ENCODE measurements at regions of chr17 and their contacts with region 1.

Region 1: DNA sequence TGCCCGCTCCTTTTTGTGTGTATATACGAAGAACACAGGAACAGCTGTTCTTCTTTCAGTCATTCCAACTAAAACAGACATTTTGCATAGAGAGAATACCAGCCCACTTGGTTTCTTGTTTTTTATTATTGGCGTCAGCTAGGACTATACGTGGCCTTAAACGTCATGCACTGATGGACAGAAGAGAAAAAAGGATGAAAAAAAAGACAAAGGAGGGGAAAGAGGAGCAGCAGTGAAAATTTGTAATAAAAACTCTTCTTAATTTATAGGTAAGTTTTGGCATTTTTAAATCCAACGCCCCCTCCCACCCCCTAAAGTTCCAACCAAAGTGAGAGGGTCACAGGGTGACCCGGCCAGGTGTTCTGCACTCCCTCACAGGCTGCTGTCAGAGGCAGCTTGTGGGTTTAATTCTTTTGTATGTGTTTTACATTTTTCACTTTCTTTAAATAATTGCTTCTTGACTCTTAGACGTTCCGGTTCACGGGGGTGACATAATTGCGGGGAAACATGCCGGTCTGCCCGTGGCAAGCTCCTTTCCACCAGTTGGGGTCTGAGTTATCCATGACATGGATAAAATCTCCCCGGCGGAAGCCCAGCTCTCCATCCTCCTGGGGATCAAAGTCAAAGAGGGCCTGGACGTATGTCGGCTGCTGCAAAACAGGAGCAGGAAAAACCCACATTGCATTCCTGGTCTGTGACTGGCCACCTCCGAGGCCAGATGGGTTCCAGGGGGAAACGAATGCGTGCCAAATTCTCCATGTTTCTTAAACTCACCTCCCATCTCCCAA is 30.9 kb upstream of the SLC25A19 start:
- DNase-seq: no peak
- ATAC-seq: peak; percentile 67
- H3K4me3 ChIP-seq: peak overlapping the region; percentile 59; the same call in 1 of the 2 replicates
- H3K27ac ChIP-seq: peak overlapping the region; percentile 85
- H3K4me1 ChIP-seq: peaks cover 76% of the 10 kb centered on the region
- H3K27me3 ChIP-seq: no peaks in the 10 kb centered on the region
- CTCF ChIP-seq: no peak
- EP300 ChIP-seq: peak; percentile 63 to 75; a peak in 3 of 4 replicates
- POLR2A ChIP-seq: no peak; the same call in 1 of the 2 replicates
- RAD21 ChIP-seq: no peak; the same call in 1 of the 2 replicates

Region 2: DNA sequence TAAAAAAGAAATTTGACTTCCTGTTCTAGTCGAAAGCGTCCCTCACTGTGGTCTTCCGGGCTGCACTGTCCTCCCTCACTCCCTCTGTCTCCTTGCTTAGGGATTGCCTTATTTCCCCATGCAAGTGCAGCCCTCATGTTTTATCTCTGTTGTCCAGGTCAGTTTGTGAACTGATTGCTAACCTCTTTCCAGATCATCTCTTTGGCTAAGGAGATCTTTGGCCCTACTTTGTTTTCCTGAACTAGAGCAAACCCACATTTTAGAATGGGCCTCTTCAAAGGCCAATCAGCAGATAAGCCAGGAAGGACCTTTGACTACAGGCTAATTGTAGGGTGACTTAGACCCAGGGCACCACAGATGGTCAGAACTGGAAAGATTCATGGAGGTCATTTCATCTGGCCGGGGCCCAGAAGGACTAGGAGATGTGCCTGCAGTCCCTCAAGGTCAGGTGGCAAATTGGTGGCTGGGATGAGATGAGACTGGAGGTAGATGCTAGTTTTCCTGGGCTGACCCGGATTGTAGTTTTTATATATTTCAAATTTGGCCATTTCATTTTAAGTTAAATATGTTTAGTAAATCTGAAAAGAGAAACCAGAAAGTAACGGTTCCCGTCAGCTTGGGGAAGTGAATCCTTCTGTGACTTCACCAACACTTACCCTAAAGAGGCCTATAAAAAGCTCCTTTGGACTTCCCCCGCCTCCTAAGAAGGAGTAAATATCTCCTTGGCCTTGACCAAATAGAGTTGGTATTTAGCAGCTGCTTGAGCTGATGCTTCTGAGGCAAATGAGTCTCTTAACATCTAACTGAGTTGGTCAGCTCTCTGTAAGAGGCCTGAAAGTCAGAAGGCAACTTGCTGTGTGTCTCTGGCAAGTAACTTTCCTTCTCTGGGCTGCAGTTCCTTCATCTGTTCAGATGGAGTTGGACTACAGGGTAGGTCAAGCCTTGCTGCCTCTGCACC is 24.6 kb before region 1 on chr17:
- CTCF ChIA-PET with region 1: interaction called, 48 read pairs
- POLR2A ChIA-PET with region 1: interaction called, 255 read pairs
- RAD21 ChIA-PET with region 1: interaction called, 364 read pairs
- SMC1A ChIA-PET with region 1: interaction called, 243 read pairs
- in situ Hi-C with region 1: no loop called
- intact Hi-C with region 1: loop called (anchors 1 kb)
- DNase-seq: peak; percentile 97
- ATAC-seq: peak; percentile 74
- H3K4me3 ChIP-seq: peak overlapping the region; percentile 59; the same call in 1 of the 2 replicates
- H3K27ac ChIP-seq: peak overlapping the region; percentile 97
- H3K4me1 ChIP-seq: peaks cover 68% of the 10 kb centered on the region
- H3K27me3 ChIP-seq: no peaks in the 10 kb centered on the region
- CTCF ChIP-seq: no peak
- EP300 ChIP-seq: peak; percentile 93 to 97
- POLR2A ChIP-seq: peak; percentile 79
- RAD21 ChIP-seq: peak; percentile 27; the same call in 1 of the 2 replicates

Region 3: GRCh38 chr17:75345514-75346167 is 25.5 kb after region 1 on chr17:
- CTCF ChIA-PET with region 1: interaction called, 182 read pairs
- POLR2A ChIA-PET with region 1: interaction called, 21 read pairs
- RAD21 ChIA-PET with region 1: interaction called, 35 read pairs
- SMC1A ChIA-PET with region 1: interaction called, 83 read pairs
- in situ Hi-C with region 1: no loop called
- intact Hi-C with region 1: no loop called
- DNase-seq: peak; percentile 91
- ATAC-seq: peak; percentile 79
- H3K4me3 ChIP-seq: peak overlapping the region; percentile 62
- H3K27ac ChIP-seq: peak overlapping the region; percentile 85
- H3K4me1 ChIP-seq: peaks cover 68% of the 10 kb centered on the region
- H3K27me3 ChIP-seq: no peaks in the 10 kb centered on the region
- CTCF ChIP-seq: no peak
- EP300 ChIP-seq: peak; percentile 34 to 65; a peak in 1 of 4 replicates
- POLR2A ChIP-seq: no peak
- RAD21 ChIP-seq: 0 out of 2 replicates have a peak, but pooled peaks have one; percentile 25

Region 4: GRCh38 chr17:75380315-75380714 is 60.2 kb after region 1 on chr17:
- CTCF ChIA-PET with region 1: interaction called, 28 read pairs
- POLR2A ChIA-PET with region 1: interaction called, 10 read pairs
- RAD21 ChIA-PET with region 1: interaction called, 8 read pairs
- SMC1A ChIA-PET with region 1: interaction called, 33 read pairs
- in situ Hi-C with region 1: no loop called
- intact Hi-C with region 1: no loop called
- DNase-seq: no peak
- ATAC-seq: no peak
- H3K4me3 ChIP-seq: no peak overlapping the region
- H3K27ac ChIP-seq: no peak overlapping the region
- H3K4me1 ChIP-seq: peaks cover 6% of the 10 kb centered on the region; the same call in 1 of the 2 replicates
- H3K27me3 ChIP-seq: no peaks in the 10 kb centered on the region
- CTCF ChIP-seq: no peak
- EP300 ChIP-seq: no peak
- POLR2A ChIP-seq: no peak
- RAD21 ChIP-seq: no peak

Region 5: GRCh38 chr17:75405365-75406221 is 85.5 kb after region 1 on chr17 and contains the start of gene GRB2:
- CTCF ChIA-PET with region 1: interaction called, 52 read pairs
- POLR2A ChIA-PET with region 1: interaction called, 10 read pairs
- RAD21 ChIA-PET with region 1: interaction called, 46 read pairs
- SMC1A ChIA-PET with region 1: interaction called, 18 read pairs
- in situ Hi-C with region 1: no loop called
- intact Hi-C with region 1: loop called (anchors 1 kb)
- DNase-seq: peak; percentile 83
- ATAC-seq: peak; percentile 82
- H3K4me3 ChIP-seq: peak within 1 kb of the TSS; percentile 87
- H3K27ac ChIP-seq: peak within 1 kb of the TSS; percentile 91
- H3K4me1 ChIP-seq: peaks cover 16% of the 10 kb centered on the region
- H3K27me3 ChIP-seq: no peaks in the 10 kb centered on the region
- CTCF ChIP-seq: no peak
- EP300 ChIP-seq: peak in 1 of 2 experiments; percentile 30; a peak in 1 of 4 replicates
- POLR2A ChIP-seq: peak; percentile 98
- RAD21 ChIP-seq: no peak
- polyA plus RNA-seq, gene GRB2: 113 to 152 TPM